CD8-positive, alpha-beta T cell (primary cell): ENCODE measurements at regions of chr7 and their contacts with region 1.

Region 1: DNA sequence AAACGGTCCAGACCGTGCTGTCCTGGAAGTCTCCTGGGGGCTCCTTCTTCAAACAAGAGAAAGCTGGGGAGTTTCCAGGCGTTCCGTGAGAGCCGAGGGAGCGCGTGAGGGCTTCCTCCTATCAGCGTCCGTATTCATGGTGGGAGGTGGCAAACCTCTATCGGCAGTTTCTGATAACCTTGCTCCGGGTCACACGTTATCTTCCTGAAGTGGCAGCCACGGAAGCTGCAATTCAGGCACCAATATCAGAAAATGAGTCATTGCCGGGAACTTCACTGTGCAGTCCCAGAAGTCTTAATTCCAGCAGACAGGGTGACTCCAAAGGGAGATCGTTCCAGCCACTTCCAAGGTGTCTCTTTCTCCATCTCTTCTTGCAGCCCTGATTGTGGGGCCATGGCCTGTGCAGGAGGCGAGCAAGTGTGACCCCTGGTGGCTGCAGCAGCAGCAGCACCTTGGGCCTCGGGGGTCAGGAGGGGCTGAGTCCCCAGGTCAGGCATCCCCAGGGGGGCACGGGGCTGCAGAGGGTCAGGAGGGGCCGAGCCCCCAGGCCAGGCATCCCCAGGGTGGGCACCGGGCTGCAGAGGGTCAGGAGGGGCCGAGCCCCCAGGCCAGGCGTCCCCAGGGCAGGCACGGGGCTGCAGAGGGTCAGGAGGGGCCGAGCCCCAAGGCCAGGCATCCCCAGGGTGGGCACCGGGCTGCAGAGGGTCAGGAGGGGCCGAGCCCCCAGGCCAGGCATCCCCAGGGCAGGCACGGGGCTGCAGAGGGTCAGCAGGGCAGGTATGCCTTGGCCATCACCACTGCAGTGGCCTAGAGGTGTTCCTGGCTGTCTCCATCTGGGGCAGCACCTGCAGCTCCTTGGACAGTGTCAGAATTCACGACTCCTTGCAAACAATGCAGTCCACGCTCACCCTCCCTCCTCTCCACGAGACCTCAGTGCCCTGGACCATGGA is 538.7 kb downstream of the DNAJB6 start:
- DNase-seq: peak in 8 of 9 experiments; percentile 29 to 72 (median 55)
- ATAC-seq: peak; percentile 78
- H3K4me3 ChIP-seq: peak overlapping the region; percentile 15 to 16
- H3K4me3 Mint-ChIP-seq: peak overlapping the region; percentile 84
- H3K27ac ChIP-seq: no peak overlapping the region
- H3K27ac Mint-ChIP-seq: peak overlapping the region; percentile 53
- H3K4me1 ChIP-seq: peaks cover 38% of the 10 kb centered on the region
- H3K4me1 Mint-ChIP-seq: peaks cover 35% of the 10 kb centered on the region
- H3K27me3 ChIP-seq: no peaks in the 10 kb centered on the region
- H3K27me3 Mint-ChIP-seq: no peaks in the 10 kb centered on the region
- CTCF ChIP-seq: peak; percentile 69

Region 2: DNA sequence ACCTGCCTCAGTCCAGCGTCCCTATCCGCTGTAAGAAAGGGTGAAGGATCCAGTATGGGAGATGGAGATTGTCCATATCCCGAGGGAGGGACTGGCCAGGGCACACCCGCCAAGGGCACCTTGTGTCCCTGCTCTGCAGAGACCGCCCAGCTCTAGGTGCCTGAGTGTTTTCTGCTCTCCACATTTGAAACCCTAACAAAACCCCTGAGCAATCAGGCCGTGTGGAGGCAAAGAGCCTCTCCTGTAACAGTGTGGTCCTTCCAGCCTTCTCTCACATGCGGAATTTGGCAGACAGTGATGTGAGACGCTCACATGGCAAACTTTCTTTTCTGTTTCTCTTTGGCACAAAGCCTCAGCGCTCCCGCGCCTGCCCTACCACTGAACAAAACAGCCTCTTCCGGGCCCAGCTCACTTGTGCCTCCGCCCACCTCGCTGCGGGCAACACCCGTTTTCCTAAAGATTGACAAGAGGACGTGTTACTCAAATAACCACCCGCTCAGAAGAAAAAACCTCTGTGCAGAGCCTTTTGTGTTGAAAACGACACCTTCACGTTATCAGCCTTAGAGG is 23.9 kb before region 1 on chr7:
- CTCF ChIA-PET with region 1: interaction called, 4 read pairs
- POLR2A ChIA-PET with region 1: no interaction called
- intact Hi-C with region 1: loop called in 1 of 2 experiments (anchors 1 kb)
- DNase-seq: peak; percentile 27 to 85 (median 67)
- ATAC-seq: peak; percentile 98
- H3K4me3 ChIP-seq: peak overlapping the region; percentile 7 to 18
- H3K4me3 Mint-ChIP-seq: peak overlapping the region; percentile 69
- H3K27ac ChIP-seq: peak overlapping the region; percentile 49 to 50
- H3K27ac Mint-ChIP-seq: peak overlapping the region; percentile 92
- H3K4me1 ChIP-seq: peaks cover 13% of the 10 kb centered on the region
- H3K4me1 Mint-ChIP-seq: peaks cover 16% of the 10 kb centered on the region
- H3K27me3 ChIP-seq: no peaks in the 10 kb centered on the region
- H3K27me3 Mint-ChIP-seq: no peaks in the 10 kb centered on the region
- CTCF ChIP-seq: no peak